K562 (cell line): ENCODE measurements at regions of chr3 and their contacts with region 1.

Region 1: DNA sequence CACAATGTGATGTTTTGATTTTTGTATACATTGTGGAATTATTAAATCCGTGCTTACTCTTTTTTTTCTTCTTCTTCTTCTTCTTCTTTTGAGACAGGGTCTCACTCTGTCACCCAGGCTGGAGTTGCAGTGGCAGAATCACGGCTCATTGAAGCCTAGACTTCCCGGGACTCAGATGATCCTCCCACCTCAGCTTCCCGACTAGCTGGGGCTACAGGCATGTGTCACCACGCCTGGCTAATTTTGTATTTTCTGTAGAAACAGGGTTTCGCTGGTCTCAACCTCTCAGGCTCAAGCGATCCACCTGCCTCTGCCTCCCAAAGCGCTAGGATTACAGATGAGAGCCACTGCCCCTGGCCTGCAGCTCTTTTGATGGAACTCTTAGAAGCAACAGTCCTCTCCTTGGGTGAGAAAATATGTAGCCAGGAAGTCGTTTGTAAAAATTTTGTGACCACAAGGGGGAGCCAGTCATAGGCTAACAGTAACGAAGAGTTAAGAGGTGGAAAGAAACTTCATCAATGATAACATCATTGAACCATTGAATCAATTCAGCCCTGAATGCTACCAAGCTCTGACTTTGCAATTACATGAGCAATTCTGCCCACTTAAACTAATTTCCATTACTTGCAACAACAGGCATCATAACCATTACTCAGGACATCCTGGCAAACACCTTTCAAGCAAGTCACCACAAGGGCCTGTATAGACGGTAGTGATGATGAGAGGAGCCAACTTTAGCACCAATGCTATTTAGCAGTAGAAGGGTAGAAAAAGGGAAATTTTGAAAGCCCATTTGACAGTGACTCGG is 16.7 kb upstream of the CMTM7 start:
- DNase-seq: peak; percentile 48 to 76 (median 52)
- ATAC-seq: peak; percentile 90
- H3K4me3 ChIP-seq: no peak overlapping the region
- H3K27ac ChIP-seq: no peak overlapping the region
- H3K4me1 ChIP-seq: no peaks in the 10 kb centered on the region
- H3K27me3 ChIP-seq: peaks cover 5 to 16% of the 10 kb centered on the region in 2 experiments
- CTCF ChIP-seq: peak; percentile 56 to 74 (median 69)
- EP300 ChIP-seq: no peak
- POLR2A ChIP-seq: no peak
- RAD21 ChIP-seq: peak; percentile 51 to 71

Region 2: GRCh38 chr3:32399030-32399620 is 24.1 kb after region 1 on chr3:
- CTCF ChIA-PET with region 1: interaction called, 4 read pairs
- POLR2A ChIA-PET with region 1: no interaction called
- in situ Hi-C with region 1: no loop called
- intact Hi-C with region 1: loop called (anchors 1 kb)
- DNase-seq: peak; percentile 51 to 68 (median 58)
- ATAC-seq: peak; percentile 77
- H3K4me3 ChIP-seq: no peak overlapping the region
- H3K27ac ChIP-seq: no peak overlapping the region
- H3K4me1 ChIP-seq: peaks cover 0 to 6% of the 10 kb centered on the region in 2 experiments; a peak in 1 of 5 replicates
- H3K27me3 ChIP-seq: peaks cover 24 to 39% of the 10 kb centered on the region in 2 experiments; a peak in 4 of 5 replicates
- CTCF ChIP-seq: peak; percentile 63 to 87 (median 67); a peak in 5 of 6 replicates
- EP300 ChIP-seq: no peak
- POLR2A ChIP-seq: no peak
- RAD21 ChIP-seq: peak; percentile 28 to 63; a peak in 3 of 4 replicates

Region 3: DNA sequence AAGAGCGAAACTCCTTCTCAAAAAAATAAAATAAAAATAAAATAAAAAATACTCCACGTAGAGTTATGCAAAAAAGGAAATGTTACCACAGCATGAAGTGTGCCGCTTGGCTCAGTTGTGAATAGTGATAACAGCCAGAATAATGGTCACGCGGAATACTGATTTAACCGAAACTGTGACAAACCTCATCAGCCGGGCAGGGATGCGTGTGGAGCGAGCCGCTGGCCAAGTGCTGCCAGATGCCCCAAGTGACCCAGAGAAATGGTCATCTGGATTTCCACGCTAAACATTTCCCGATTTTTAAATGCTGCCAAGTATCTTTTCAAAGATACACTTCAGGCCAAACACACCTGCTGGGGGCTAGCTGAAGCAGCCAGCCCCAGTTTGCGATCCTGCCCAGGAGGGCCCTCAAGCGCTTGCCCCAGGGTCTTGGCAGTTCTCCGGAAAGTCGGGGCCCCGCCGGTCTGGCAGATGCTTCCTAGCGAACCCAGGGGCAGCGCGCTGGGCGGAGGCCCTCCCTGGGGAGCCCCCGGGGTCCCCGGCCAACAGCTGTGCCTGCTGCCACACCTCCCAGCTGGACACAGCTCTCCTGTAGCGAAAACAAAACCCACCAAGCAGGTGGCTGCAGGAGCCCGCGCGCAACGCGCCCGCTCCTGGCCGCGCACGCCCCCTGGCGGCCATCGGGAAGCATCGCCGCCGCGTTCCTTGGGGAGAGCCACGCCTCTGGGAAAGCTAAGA is 92.5 kb after region 1 on chr3:
- CTCF ChIA-PET with region 1: interaction called, 8 read pairs
- POLR2A ChIA-PET with region 1: no interaction called
- in situ Hi-C with region 1: no loop called
- intact Hi-C with region 1: loop called (anchors 1 kb)
- DNase-seq: peak; percentile 84 to 94 (median 89)
- ATAC-seq: peak; percentile 99
- H3K4me3 ChIP-seq: no peak overlapping the region
- H3K27ac ChIP-seq: no peak overlapping the region
- H3K4me1 ChIP-seq: peaks cover 0 to 7% of the 10 kb centered on the region in 2 experiments; a peak in 2 of 5 replicates
- H3K27me3 ChIP-seq: no peaks in the 10 kb centered on the region
- CTCF ChIP-seq: peak; percentile 92 to 97 (median 94)
- EP300 ChIP-seq: no peak
- POLR2A ChIP-seq: no peak
- RAD21 ChIP-seq: peak; percentile 63 to 90

Region 4: GRCh38 chr3:32510075-32510724 is 135.2 kb after region 1 on chr3:
- CTCF ChIA-PET with region 1: no interaction called
- POLR2A ChIA-PET with region 1: no interaction called
- in situ Hi-C with region 1: no loop called
- intact Hi-C with region 1: no loop called
- DNase-seq: peak; percentile 53 to 86 (median 70)
- ATAC-seq: peak; percentile 99
- H3K4me3 ChIP-seq: no peak overlapping the region
- H3K27ac ChIP-seq: no peak overlapping the region
- H3K4me1 ChIP-seq: no peaks in the 10 kb centered on the region; a peak in 1 of 5 replicates
- H3K27me3 ChIP-seq: no peaks in the 10 kb centered on the region
- CTCF ChIP-seq: peak; percentile 87 to 99 (median 90)
- EP300 ChIP-seq: 0 out of 2 replicates have a peak, but pooled peaks have one; percentile 5
- POLR2A ChIP-seq: no peak
- RAD21 ChIP-seq: peak; percentile 99 to 100

Region 5: GRCh38 chr3:32667122-32667521 is 292.1 kb after region 1 on chr3:
- CTCF ChIA-PET with region 1: interaction called, 8 read pairs
- POLR2A ChIA-PET with region 1: no interaction called
- in situ Hi-C with region 1: loop called (anchors 5 kb)
- intact Hi-C with region 1: loop called (anchors 10 kb)
- DNase-seq: no peak
- ATAC-seq: no peak
- H3K4me3 ChIP-seq: no peak overlapping the region
- H3K27ac ChIP-seq: no peak overlapping the region
- H3K4me1 ChIP-seq: peaks cover 0 to 2% of the 10 kb centered on the region in 2 experiments; a peak in 1 of 5 replicates
- H3K27me3 ChIP-seq: 0 out of 5 replicates have a peak, but pooled peaks cover 0 to 2% of the 10 kb centered on the region in 2 experiments
- CTCF ChIP-seq: no peak
- EP300 ChIP-seq: no peak
- POLR2A ChIP-seq: no peak
- RAD21 ChIP-seq: no peak

Region 6: GRCh38 chr3:33256249-33256648 is 881.3 kb after region 1 on chr3:
- CTCF ChIA-PET with region 1: no interaction called
- POLR2A ChIA-PET with region 1: no interaction called
- in situ Hi-C with region 1: no loop called
- intact Hi-C with region 1: no loop called
- DNase-seq: no peak
- ATAC-seq: peak; percentile 39
- H3K4me3 ChIP-seq: no peak overlapping the region
- H3K27ac ChIP-seq: no peak overlapping the region
- H3K4me1 ChIP-seq: no peaks in the 10 kb centered on the region
- H3K27me3 ChIP-seq: no peaks in the 10 kb centered on the region
- CTCF ChIP-seq: no peak
- EP300 ChIP-seq: no peak
- POLR2A ChIP-seq: no peak
- RAD21 ChIP-seq: no peak